A673 (cell line): ENCODE measurements at regions of chr17 and their contacts with region 1.

Region 1: DNA sequence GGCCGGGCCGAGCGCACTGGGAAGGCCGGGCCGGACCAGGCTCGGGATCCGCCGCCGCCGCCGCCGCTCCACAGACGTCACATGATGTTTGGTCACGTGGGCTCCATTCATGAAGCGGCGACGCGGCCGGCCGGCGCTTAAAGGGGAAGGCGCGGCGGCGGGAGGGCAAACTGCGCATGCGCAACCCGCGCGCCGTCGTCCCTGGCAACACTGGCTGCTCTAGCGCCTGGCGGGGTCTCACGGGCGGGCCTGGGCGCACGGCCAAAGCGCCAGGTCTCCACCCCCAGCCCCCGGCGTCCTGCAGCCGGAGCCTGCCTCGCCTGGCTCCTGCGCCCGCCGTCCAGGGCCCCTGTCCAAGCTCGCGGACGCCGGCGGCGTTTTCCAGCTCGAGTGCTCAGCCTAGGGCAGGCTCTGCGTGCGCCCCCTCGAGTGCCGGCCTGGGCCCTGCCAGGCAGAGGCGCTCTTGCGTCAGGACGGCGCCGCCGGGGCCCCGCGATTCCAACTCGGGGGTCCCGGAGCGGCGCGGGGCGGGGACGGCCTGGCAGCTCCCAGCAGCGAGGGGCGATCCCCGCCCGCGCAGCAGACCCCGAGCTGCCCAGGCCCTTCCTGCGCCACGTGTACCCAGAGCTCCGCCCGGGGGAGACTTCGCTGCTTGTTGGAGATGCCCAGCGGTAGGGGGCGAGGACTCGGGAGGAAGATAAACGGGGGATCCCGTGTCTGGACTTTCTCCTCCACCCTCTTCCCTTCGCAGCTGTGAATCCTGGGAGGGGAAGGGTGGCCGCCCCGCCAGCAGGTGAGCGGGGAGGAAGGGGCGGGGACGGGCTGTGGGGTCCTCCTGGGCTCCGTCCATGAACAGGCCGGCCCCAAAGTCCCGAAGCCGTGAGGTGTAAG is at the start of gene MAFG:
- DNase-seq: peak; percentile 97
- H3K4me3 ChIP-seq: peak within 1 kb of the TSS; percentile 94
- H3K27ac ChIP-seq: peak within 1 kb of the TSS; percentile 92
- H3K4me1 ChIP-seq: peaks cover 37% of the 10 kb centered on the region
- H3K27me3 ChIP-seq: no peaks in the 10 kb centered on the region
- CTCF ChIP-seq: peak; percentile 55; the same call in 1 of the 2 replicates
- total RNA-seq, gene MAFG: 46.7 and 49.7 TPM in 2 replicates

Region 2: GRCh38 chr17:81711814-81712467 is 216.0 kb before region 1 on chr17 and contains the start of gene SLC25A10:
- CTCF ChIA-PET with region 1: no interaction called
- POLR2A ChIA-PET with region 1: interaction called, 16 read pairs
- intact Hi-C with region 1: no loop called
- DNase-seq: peak; percentile 90
- H3K4me3 ChIP-seq: peak within 1 kb of the TSS; percentile 85
- H3K27ac ChIP-seq: peak within 1 kb of the TSS; percentile 84
- H3K4me1 ChIP-seq: peaks cover 19% of the 10 kb centered on the region
- H3K27me3 ChIP-seq: no peaks in the 10 kb centered on the region
- CTCF ChIP-seq: no peak
- total RNA-seq, gene SLC25A10: 46.8 and 56.2 TPM in 2 replicates

Region 3: GRCh38 chr17:81890447-81891299 is 37.2 kb before region 1 on chr17:
- CTCF ChIA-PET with region 1: no interaction called
- POLR2A ChIA-PET with region 1: interaction called, 19 read pairs
- intact Hi-C with region 1: no loop called
- DNase-seq: no peak
- H3K4me3 ChIP-seq: peak overlapping the region; percentile 80
- H3K27ac ChIP-seq: peak overlapping the region; percentile 98
- H3K4me1 ChIP-seq: peaks cover 11% of the 10 kb centered on the region
- H3K27me3 ChIP-seq: no peaks in the 10 kb centered on the region
- CTCF ChIP-seq: no peak